ENCODE measurements at regions of chr11 and their contacts with region 1.

Region 1: GRCh38 chr11:74255741-74256369 is 55.6 kb downstream of the P4HA3 start:
- DNase-seq: peak; percentile 60
- H3K4me3 ChIP-seq: no peak overlapping the region
- H3K27ac ChIP-seq: no peak overlapping the region
- H3K4me1 ChIP-seq: no peaks in the 10 kb centered on the region
- H3K27me3 ChIP-seq: no peaks in the 10 kb centered on the region
- CTCF ChIP-seq: peak; percentile 87

Region 2: DNA sequence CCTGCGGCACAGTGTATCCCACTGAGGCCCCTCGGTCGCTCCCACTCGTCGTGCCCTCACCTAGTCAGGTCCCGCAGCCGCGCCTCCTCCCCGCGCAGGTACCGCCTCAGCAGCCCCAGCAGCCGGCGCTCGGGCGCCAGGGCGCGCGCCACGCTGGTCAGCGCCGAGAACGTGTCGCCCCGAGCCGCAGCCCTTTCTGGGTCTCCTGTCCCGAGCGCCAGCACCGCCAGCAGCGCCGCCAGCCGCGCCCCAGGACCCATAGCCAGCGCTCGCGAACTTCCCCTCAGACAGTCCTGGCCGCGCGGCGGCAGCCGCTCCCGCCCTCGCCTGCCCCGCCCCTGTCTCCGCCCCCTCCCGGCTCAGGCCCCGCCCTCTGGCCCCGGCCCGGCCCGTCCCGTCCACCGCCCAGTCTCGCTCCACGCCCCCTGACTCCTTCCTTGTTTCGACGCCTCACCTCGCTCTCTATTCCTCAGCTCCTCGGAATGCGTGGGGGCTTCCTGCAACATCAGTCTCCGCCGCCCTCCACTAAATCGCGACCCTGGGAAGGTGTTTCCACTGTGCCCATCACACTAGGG is 55.6 kb after region 1 on chr11 and contains the start of gene P4HA3:
- intact Hi-C with region 1: loop called (anchors 10 kb)
- DNase-seq: peak; percentile 86
- H3K4me3 ChIP-seq: peak within 1 kb of the TSS; percentile 56
- H3K27ac ChIP-seq: no peak within 1 kb of the TSS
- H3K4me1 ChIP-seq: no peaks in the 10 kb centered on the region
- H3K27me3 ChIP-seq: no peaks in the 10 kb centered on the region
- CTCF ChIP-seq: no peak
- total RNA-seq, gene P4HA3: 0.12 to 0.85 TPM

Region 3: DNA sequence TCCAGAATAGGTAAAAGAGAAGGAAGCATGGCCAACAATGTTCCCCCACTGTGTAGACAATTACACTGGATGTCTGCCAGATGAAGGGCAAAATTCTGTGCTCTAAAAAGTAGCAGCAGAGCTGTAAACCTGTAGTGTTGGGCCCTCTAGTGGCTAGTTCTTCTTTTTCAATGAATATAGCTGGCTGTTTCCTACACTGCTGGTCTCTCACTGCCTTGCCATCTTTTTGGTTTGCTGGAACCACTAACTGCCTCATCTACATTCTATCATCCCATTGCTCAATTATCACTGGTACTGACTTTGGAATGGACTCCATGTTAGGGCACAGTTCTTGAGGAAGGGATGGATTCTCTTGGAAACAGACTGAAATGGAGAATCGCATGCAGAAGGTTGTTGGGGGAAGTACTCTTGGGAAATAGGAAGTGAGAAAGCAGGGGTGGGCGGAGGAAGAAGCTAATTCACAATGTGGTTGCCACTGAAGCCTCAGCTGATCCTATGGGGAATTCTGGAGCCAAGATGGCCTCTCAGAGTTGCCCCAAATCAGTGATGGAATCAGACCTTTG is 193.6 kb after region 1 on chr11:
- intact Hi-C with region 1: loop called (anchors 2 kb)
- DNase-seq: peak; percentile 63
- H3K4me3 ChIP-seq: no peak overlapping the region
- H3K27ac ChIP-seq: no peak overlapping the region
- H3K4me1 ChIP-seq: no peaks in the 10 kb centered on the region
- H3K27me3 ChIP-seq: no peaks in the 10 kb centered on the region
- CTCF ChIP-seq: peak; percentile 68

Region 4: DNA sequence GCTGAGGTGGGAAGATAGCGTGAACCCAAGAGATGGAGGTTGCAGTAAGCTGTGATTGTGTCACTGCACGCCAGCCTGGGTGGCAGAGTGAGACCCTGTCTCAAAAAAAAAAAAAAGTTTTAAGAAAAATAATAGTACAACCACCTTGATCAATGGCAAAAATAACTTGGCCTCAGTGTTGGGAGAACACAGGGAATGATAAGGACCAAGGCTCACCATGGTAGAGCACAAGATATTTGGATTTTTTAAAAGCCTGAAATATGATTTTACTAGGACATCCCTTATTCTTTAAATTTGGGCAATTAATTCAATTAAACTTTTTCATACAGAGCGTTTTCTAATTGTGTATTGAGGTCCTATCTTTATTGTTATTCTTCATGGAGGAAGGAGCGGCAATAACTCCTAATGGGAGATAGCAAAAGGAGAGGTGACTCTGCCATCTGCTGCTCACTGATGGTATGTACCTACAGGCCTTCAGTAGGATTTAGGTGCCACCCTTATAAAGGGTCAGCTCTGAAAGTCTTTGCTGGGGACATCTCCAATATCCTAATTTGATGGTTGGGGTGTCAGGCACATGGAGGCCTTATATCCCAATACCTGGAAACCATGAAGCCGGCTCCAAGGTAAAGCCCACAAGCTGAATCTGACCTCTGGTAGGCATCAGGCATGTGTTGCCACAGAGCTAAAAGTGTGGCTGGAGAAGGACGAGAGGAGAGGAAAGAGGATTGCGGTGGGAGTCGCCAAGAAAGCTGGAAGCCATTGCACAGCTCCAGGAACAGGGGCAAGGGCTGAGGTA is 314.6 kb after region 1 on chr11:
- intact Hi-C with region 1: loop called (anchors 10 kb)
- DNase-seq: peak; percentile 74
- H3K4me3 ChIP-seq: no peak overlapping the region
- H3K27ac ChIP-seq: no peak overlapping the region
- H3K4me1 ChIP-seq: no peaks in the 10 kb centered on the region
- H3K27me3 ChIP-seq: no peaks in the 10 kb centered on the region
- CTCF ChIP-seq: peak; percentile 54